Mammary epithelial cell (primary cell): ENCODE measurements at regions of chr3 and their contacts with region 1.

Region 1: GRCh38 chr3:82707035-82707434 is 945.6 kb upstream of the GBE1 start:
- DNase-seq: peak; percentile 5
- H3K4me3 ChIP-seq: no peak overlapping the region
- H3K27ac ChIP-seq: no peak overlapping the region
- H3K4me1 ChIP-seq: no peaks in the 10 kb centered on the region
- H3K27me3 ChIP-seq: no peaks in the 10 kb centered on the region
- CTCF ChIP-seq: peak in 1 of 2 donors; percentile 59

Region 2: DNA sequence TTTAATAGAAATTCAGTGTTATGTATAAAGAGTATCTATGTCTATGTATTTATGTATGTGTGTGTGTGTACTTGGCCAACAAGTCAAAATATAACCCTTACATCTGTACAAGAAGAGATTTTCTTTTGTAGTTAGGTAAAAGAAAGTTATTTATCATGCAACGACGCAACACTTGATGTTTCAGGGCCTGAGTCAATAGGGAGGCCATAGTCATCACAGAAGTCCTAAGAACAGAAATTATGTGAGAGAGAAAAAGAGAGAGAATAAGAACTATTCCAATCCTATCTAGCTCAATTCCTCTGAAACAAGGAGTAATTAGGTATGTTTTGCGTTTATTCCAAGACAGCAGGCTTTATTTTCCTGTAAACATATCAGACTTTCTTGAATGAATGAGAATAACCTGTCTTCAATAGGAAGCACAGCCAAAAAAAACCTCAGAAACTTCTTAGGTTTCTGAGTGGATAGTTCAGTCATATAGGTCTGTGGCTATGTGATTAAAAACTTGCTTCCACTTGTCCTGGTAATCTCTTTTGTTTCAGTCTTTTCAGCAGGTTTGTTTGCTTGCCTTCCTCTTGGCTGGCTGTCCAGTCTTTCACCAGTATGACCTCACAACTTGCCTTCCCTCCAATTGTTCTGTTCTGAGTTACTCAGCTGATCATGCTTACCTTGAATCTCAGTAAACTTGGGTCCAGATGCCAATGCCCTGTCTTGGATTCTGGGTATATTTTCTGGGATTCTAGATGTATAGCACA is 563.2 kb before region 1 on chr3:
- CTCF ChIA-PET with region 1: no interaction called
- dilution Hi-C with region 1: no loop called
- in situ Hi-C with region 1: no loop called
- intact Hi-C with region 1: no loop called
- DNase-seq: peak; percentile 81
- H3K4me3 ChIP-seq: no peak overlapping the region
- H3K27ac ChIP-seq: no peak overlapping the region
- H3K4me1 ChIP-seq: peaks cover 2% of the 10 kb centered on the region
- H3K27me3 ChIP-seq: no peaks in the 10 kb centered on the region
- CTCF ChIP-seq: no peak

Region 3: DNA sequence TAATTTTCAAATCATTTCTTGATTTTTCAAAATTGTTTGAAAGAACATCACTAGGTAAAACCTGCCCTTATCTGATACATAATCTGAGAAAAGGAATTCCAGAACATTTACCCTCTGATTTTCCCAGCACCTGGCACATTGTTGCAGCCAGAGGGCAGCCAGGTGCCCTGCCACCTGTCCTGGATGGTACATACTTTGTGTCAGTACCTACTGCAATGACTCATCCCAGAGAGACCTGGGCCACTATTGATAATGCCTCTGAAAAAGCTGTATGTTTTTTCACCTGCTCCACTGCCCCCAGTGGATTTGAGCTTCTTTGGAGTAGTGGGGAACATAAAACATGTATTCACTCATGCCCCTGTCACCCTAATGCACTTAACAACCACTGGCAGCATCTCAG is 296.7 kb before region 1 on chr3:
- CTCF ChIA-PET with region 1: no interaction called
- dilution Hi-C with region 1: no loop called
- in situ Hi-C with region 1: no loop called
- intact Hi-C with region 1: loop called (anchors 1 kb)
- DNase-seq: no peak
- H3K4me3 ChIP-seq: no peak overlapping the region
- H3K27ac ChIP-seq: no peak overlapping the region
- H3K4me1 ChIP-seq: no peaks in the 10 kb centered on the region
- H3K27me3 ChIP-seq: no peaks in the 10 kb centered on the region
- CTCF ChIP-seq: peak in 1 of 2 donors; percentile 48

Region 4: GRCh38 chr3:82496890-82497560 is 210.0 kb before region 1 on chr3:
- CTCF ChIA-PET with region 1: no interaction called
- dilution Hi-C with region 1: no loop called
- in situ Hi-C with region 1: no loop called
- intact Hi-C with region 1: loop called (anchors 1 kb)
- DNase-seq: peak; percentile 8
- H3K4me3 ChIP-seq: no peak overlapping the region
- H3K27ac ChIP-seq: no peak overlapping the region
- H3K4me1 ChIP-seq: no peaks in the 10 kb centered on the region
- H3K27me3 ChIP-seq: no peaks in the 10 kb centered on the region
- CTCF ChIP-seq: peak; percentile 41 to 59